WTC11 (cell line): ENCODE measurements at regions of chr21 and their contacts with region 1.

Region 1: GRCh38 chr21:43728467-43729390 is 9.8 kb downstream of the PDXK start:
- DNase-seq: peak; percentile 80
- ATAC-seq: peak; percentile 80
- H3K4me3 Mint-ChIP-seq: peak overlapping the region; percentile 80
- H3K27ac Mint-ChIP-seq: peak overlapping the region; percentile 84
- H3K4me1 Mint-ChIP-seq: peaks cover 23% of the 10 kb centered on the region
- H3K27me3 Mint-ChIP-seq: no peaks in the 10 kb centered on the region
- CTCF ChIP-seq: no peak

Region 2: DNA sequence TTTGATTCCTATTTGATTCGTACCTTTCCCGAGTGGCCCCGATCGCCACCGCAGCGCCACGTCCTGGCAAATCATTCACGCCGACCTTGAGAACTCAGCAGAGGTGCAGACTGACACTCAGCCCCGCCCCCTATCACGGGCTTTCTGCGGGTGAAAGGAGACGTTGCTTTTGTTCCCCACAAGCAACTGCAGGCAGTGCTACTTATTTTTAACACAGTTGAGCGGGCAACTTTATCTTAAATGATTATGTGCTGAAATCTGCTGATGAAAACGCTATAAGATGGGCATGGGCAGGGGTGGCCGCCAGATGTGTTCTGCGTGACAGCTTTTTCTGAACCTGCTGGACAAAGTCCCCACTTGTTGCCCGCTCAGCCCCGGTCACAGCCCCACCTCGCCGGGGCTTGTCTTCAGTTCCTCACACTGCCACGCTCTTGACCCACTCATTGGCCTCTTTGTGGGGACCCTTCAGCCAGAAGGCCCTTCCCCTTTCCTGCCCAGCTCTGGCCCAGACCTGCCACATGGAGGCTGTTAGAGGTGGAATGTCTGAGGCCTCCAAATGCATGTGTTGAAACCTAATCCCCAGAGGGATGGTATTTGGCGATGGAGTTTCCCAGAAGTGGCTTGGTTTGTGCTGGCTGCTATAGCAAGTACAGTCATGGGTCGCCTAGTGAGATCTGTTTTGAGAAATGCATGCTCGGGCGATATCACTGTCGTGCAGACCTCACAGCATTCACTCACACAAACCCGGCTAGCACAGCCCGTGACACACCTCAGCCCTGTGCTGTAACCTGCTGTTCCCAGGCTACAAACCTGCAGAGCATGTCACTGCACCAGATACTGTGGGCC is 25.5 kb before region 1 on chr21:
- CTCF ChIA-PET with region 1: interaction called, 20 read pairs
- POLR2A ChIA-PET with region 1: interaction called, 4 read pairs
- DNase-seq: peak; percentile 58
- ATAC-seq: peak; percentile 70
- H3K4me3 Mint-ChIP-seq: no peak overlapping the region
- H3K27ac Mint-ChIP-seq: peak overlapping the region; percentile 57
- H3K4me1 Mint-ChIP-seq: peaks cover 11% of the 10 kb centered on the region
- H3K27me3 Mint-ChIP-seq: no peaks in the 10 kb centered on the region
- CTCF ChIP-seq: no peak

Region 3: DNA sequence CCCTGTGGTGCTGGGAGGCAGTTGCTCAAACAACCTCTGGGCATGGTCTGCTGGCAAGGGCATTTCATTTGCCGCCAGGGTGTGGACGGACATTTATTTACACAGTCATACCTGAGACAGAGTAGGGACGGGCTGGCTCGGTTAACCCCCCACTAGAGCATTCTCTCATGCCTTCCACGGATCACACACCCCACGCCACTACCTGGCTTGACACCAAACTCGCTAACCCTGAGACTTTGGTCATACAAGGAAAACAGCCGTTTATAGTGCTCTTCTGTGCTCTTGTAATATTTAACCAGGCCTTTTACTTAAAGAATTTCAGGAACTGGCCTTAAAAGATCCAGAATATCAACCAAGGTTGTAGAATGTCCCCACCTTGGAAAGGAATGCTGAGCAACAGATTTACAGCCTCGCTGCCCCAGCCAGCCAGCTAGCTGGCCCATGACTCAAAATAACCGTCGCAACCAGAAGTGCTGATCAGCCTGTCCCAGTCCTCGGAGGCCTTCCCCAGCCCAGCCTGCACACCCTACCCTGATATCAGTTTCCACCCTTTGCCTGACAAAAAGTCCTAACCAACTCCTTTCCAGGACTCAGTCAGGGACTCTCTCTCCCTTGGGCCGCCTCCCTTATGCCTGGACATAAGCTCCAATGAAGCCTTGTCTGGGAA is 16.3 kb before region 1 on chr21:
- CTCF ChIA-PET with region 1: interaction called, 45 read pairs
- POLR2A ChIA-PET with region 1: interaction called, 3 read pairs
- DNase-seq: no peak
- ATAC-seq: peak; percentile 41
- H3K4me3 Mint-ChIP-seq: no peak overlapping the region
- H3K27ac Mint-ChIP-seq: peak overlapping the region; percentile 88; the same call in 1 of the 2 replicates
- H3K4me1 Mint-ChIP-seq: peaks cover 21% of the 10 kb centered on the region
- H3K27me3 Mint-ChIP-seq: peaks cover 3% of the 10 kb centered on the region
- CTCF ChIP-seq: no peak

Region 4: DNA sequence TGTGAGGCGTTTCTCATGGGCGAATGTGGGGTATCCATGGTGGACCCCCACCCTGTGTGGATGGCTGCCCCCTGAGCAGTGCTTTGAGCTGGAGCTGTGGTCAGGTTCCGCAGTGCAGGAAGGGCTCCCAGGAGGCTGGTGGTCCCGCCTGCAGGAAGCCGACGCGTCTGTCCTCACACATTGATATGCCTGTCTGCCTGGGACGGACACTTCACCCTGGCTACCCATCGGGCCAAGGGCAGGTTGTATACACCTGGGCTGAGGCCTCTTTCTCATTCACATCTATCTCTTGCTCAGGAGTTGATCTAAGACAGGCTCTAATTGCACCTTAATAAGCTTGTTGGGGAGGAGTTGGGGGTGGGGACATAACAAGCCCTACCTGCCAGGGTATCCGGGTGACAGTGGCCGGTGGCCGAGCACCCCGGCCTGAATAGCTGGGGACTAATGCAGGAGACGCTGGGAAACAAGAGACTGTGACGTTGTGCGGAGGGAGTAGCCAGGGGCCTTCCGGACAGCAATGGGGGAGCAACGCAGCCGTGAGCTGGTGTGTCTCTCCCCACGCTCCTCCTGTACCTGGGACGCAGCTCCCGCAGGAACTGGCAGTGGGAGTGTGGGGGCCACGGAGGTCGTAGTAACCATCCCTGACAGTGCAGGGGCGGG is 11.9 kb after region 1 on chr21:
- CTCF ChIA-PET with region 1: interaction called, 44 read pairs
- POLR2A ChIA-PET with region 1: interaction called, 6 read pairs
- DNase-seq: peak; percentile 63
- ATAC-seq: peak; percentile 73
- H3K4me3 Mint-ChIP-seq: peak overlapping the region; percentile 14
- H3K27ac Mint-ChIP-seq: peak overlapping the region; percentile 78
- H3K4me1 Mint-ChIP-seq: peaks cover 16% of the 10 kb centered on the region
- H3K27me3 Mint-ChIP-seq: no peaks in the 10 kb centered on the region
- CTCF ChIP-seq: no peak

Region 5: DNA sequence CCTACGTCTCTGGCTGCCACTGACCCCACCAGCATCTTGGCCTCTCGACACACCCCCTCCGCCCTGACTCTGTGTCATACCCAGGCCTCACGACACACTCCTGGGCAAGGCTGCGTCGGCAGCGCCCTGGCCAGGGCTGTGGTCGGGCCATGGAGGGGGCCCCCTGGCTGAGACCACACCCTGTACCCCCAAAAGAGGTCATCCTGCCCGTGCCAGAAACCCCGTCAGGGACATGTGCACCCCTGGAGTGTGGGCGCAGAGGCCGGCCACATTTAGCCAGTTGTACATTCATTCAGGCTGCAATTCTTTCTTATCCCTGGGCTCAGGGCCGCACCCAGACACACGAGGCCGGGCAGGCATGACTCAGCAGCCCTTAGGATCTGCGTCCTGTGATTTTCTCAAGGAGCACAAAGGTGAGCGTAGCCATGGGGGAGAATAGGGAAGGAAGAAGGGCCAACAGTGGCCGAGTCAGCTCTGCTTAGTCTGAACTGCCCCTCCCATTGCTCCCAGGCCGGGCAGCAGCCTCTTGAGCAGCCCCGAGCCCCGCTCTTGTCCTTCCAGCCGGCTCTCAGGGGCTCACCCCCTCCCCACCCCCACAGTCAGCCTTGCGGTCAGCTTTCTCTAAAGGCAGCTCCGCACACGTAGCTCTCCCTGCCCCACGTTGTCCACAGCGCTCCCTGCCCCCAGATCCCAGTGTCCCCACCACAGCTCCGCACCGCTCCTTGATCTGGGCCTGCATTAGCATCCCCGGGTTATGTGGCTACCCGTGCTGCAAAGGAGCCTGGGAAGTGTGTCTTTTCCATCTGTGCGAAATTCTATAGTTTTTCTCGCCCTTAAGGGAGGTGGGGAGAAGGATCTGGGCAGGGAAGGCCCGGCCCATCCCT is 39.5 kb after region 1 on chr21:
- CTCF ChIA-PET with region 1: interaction called, 29 read pairs
- POLR2A ChIA-PET with region 1: no interaction called
- DNase-seq: peak; percentile 25
- ATAC-seq: peak; percentile 38
- H3K4me3 Mint-ChIP-seq: no peak overlapping the region
- H3K27ac Mint-ChIP-seq: peak overlapping the region; percentile 92
- H3K4me1 Mint-ChIP-seq: peaks cover 46% of the 10 kb centered on the region
- H3K27me3 Mint-ChIP-seq: no peaks in the 10 kb centered on the region; the same call in 1 of the 2 replicates
- CTCF ChIP-seq: no peak

Region 6: DNA sequence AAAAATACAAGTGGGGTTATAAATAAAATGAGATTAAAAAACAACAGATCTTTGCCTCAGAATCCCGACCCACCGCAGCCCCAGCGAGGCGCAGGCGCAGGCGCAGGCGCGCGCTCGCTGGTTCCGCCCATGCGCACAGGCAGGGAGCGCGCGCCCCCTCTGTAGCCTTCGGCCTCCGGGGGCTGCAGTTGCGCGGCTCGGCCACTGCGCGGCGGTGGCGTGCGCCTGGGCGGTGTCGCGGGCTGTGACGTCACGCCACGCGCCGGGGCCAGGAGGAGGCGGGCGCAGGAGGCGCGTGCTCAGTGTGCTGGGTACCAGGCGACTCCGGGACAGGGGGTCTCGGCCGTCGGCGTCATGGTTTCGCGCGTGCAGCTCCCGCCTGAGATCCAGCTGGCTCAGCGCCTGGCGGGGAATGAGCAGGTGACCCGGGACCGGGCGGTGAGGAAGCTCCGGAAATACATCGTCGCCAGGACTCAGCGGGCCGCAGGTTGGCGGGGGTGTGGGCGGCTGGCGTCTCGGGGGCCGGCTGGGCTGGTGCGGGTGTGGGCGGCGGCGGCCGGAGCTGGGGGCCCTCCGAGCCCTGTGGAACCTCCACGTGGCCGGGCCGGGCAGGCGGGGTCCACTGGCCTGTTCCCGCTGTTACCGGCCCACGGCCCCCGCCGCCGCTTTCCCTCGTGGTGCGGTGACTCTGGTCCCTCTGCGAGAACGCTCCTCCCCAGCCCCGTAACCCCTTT is 60.7 kb after region 1 on chr21 and contains the start of gene RRP1:
- CTCF ChIA-PET with region 1: interaction called, 34 read pairs
- POLR2A ChIA-PET with region 1: no interaction called
- DNase-seq: peak; percentile 90
- ATAC-seq: peak; percentile 94
- H3K4me3 Mint-ChIP-seq: peak within 1 kb of the TSS; percentile 97
- H3K27ac Mint-ChIP-seq: peak within 1 kb of the TSS; percentile 95
- H3K4me1 Mint-ChIP-seq: peaks cover 11% of the 10 kb centered on the region
- H3K27me3 Mint-ChIP-seq: no peaks in the 10 kb centered on the region
- CTCF ChIP-seq: peak; percentile 99
- total RNA-seq, gene RRP1: 45.0 to 53.0 TPM (median 45.9 TPM) in 3 replicates